ENCODE measurements at regions of chr7 and their contacts with region 1.

Region 1: GRCh38 chr7:134547397-134548054 is 1.4 kb upstream of the AKR1B15 start:
- H3K4me3 ChIP-seq: peak overlapping the region; percentile 30
- H3K27ac ChIP-seq: no peak overlapping the region
- H3K4me1 ChIP-seq: no peaks in the 10 kb centered on the region
- CTCF ChIP-seq: peak; percentile 69

Region 2: GRCh38 chr7:134480736-134481135 is 66.8 kb before region 1 on chr7:
- CTCF ChIA-PET with region 1: interaction called, 11 read pairs
- POLR2A ChIA-PET with region 1: no interaction called
- H3K4me3 ChIP-seq: no peak overlapping the region
- H3K27ac ChIP-seq: no peak overlapping the region
- H3K4me1 ChIP-seq: no peaks in the 10 kb centered on the region
- CTCF ChIP-seq: no peak

Region 3: GRCh38 chr7:134565643-134566136 is 18.2 kb after region 1 on chr7:
- CTCF ChIA-PET with region 1: interaction called, 11 read pairs
- POLR2A ChIA-PET with region 1: no interaction called
- H3K4me3 ChIP-seq: no peak overlapping the region
- H3K27ac ChIP-seq: no peak overlapping the region
- H3K4me1 ChIP-seq: no peaks in the 10 kb centered on the region
- CTCF ChIP-seq: no peak

Region 4: DNA sequence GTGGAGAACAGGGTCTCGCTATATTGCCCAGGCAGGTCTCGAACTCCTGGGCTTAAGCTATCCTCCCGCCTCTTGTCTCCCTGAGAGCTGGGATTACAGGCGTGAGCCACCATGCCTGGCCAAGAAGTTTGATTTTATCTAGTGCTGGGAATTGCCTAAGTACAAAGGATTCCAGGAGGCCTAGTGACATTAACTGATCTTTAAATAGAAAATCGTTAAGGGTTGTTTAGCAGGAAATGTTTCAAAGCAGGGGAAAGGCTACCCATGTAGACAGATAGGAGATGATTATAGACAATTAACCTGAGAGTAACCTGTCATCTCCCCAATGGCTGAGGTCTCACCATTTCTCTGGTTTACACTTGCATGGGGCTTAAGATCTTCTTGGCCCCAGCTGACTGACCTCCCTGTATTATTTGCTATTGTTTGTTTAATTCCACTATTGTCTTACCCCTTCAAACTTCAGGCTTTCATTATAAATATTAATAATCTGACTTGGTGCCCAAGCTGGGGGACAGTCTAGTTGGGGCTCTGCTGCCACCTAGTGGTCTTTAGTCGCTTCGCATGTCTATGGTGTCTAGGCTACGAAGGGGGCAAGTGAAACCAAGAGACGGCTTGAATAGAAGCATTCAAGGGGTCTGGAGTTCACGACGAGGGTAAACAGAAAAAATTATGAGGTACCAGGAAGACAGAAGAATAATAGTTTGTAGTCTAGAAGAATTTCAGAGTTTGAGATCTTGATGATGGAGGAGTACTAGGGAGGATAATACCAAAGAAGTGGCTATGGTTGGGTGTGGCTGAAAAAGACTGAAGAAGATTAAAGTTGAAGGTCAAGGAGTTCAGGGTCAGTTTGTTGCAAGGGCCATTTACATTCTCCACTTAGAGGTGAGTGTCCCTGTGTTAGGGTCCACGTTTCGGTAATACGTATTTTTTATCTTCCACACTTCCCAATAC is 58.7 kb after region 1 on chr7:
- CTCF ChIA-PET with region 1: interaction called, 10 read pairs
- POLR2A ChIA-PET with region 1: no interaction called
- H3K4me3 ChIP-seq: no peak overlapping the region
- H3K27ac ChIP-seq: no peak overlapping the region
- H3K4me1 ChIP-seq: no peaks in the 10 kb centered on the region
- CTCF ChIP-seq: peak; percentile 57

Measured in HEK293 (cell line).